ENCODE measurements at regions of chr11 and their contacts with region 1.

Region 1: GRCh38 chr11:9613118-9613829 is 39.8 kb downstream of the WEE1 start:
- DNase-seq: peak; percentile 91
- ATAC-seq: peak; percentile 76
- H3K4me3 Mint-ChIP-seq: peak overlapping the region; percentile 82
- H3K27ac Mint-ChIP-seq: peak overlapping the region; percentile 94
- H3K4me1 Mint-ChIP-seq: peaks cover 27% of the 10 kb centered on the region
- H3K27me3 Mint-ChIP-seq: peaks cover 4% of the 10 kb centered on the region

Region 2: GRCh38 chr11:9565822-9566560 is 47.3 kb before region 1 on chr11:
- CTCF ChIA-PET with region 1: interaction called, 12 read pairs
- POLR2A ChIA-PET with region 1: interaction called, 24 read pairs
- DNase-seq: peak; percentile 57
- ATAC-seq: peak; percentile 92
- H3K4me3 Mint-ChIP-seq: no peak overlapping the region
- H3K27ac Mint-ChIP-seq: peak overlapping the region; percentile 54
- H3K4me1 Mint-ChIP-seq: peaks cover 22% of the 10 kb centered on the region
- H3K27me3 Mint-ChIP-seq: peaks cover 9% of the 10 kb centered on the region

Region 3: DNA sequence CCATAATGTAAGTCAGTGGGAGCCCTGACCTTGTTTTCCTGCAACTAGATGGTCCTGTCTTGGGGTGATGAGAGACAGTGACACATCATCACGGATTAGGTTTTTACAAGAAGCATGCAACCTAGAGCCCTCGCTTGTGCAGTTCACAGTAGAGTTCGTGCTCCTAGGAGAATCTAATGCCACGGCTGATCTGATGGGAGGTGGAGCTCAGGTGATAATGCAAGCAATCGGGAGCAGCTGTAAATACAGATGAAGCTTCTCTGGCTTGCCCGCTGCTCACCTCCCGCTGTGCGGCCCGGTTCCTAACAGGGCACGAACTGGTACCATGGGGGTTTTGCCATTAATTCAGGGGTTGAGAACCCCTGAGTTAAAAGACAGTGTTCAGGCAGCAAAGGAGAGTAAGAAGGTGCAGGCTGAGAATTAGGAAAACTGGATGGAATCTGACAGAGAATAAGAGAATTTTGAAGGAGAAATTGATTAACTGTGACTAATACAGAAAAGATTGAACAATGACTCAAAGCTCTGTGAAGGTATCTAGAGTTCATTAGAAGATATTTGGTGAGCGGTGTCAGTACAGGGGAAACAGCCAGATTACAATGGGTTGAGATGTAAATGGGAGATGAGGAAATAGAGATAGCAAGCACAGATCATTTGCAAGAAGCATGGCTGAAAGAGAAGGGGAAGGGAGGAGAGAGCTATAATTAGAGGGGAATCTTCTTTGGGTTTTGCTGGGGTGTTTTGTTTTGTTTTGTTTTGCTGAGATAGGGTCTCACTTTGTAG is 18.8 kb before region 1 on chr11:
- CTCF ChIA-PET with region 1: interaction called, 62 read pairs
- POLR2A ChIA-PET with region 1: no interaction called
- DNase-seq: no peak
- ATAC-seq: no peak
- H3K4me3 Mint-ChIP-seq: no peak overlapping the region
- H3K27ac Mint-ChIP-seq: no peak overlapping the region
- H3K4me1 Mint-ChIP-seq: no peaks in the 10 kb centered on the region
- H3K27me3 Mint-ChIP-seq: peaks cover 9% of the 10 kb centered on the region

Region 4: DNA sequence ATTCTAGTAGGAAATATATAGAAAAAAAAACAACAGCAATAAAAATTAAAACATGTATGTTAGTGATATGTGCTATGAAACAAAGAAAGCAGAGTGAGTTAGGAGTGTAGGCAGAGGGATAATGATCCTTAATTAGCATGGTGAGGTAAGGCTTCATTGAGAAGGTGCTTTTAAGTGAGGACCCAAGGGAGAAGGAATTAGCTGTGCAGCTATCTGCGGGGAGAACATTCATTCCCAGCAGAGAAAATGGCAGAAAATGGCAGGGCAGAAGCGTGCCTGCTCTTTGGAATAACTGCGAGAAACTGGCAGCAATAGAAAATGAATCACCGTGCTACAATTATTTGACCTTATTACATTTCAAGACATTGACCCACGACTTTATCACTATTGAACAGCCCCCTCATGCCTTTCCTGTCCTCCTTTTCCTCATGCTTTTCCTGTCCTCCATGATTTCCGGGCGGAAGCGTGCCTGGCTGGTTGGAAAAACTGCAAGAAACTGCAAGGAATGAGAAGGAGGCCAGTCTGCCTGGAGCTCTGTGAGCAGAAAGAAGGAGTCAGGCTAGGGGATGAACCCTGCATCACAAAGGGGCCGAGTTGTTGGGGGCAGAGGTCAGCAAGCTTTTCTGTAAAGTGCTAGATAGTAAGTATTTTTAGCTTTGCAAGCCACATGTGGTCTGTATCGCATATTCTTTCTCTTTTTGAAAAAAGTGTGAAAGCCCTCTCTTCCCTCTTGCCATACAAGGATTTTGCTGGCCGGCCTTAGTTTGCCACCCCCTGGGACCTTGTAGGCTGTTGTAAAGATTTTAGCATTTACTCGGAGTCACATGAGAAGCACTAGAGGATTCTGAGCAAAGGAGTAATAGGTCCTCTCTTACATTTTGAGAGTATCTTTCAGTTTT is 13.5 kb after region 1 on chr11:
- CTCF ChIA-PET with region 1: interaction called, 23 read pairs
- POLR2A ChIA-PET with region 1: interaction called, 5 read pairs
- DNase-seq: no peak
- ATAC-seq: no peak
- H3K4me3 Mint-ChIP-seq: no peak overlapping the region
- H3K27ac Mint-ChIP-seq: no peak overlapping the region
- H3K4me1 Mint-ChIP-seq: no peaks in the 10 kb centered on the region
- H3K27me3 Mint-ChIP-seq: peaks cover 15% of the 10 kb centered on the region

Region 5: DNA sequence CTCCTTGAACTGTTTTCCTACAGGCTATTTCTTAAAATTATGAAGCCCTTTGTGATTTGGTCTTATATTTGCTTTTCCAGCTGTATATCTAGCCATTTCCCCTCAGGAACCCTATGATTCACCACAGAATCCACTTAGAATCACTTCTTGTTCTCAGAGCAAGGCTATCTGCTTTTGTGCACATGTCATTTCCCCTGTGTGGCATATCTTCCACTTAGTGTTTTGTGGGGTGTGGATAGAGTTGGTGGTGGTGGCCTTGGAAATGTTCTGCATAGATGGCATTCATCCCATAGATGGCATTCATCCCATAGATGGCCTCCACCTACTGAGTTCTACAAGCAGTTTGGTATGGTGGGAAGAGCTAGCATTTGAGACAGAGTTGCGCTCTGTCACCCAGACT is 95.3 kb after region 1 on chr11:
- CTCF ChIA-PET with region 1: no interaction called
- POLR2A ChIA-PET with region 1: no interaction called
- DNase-seq: no peak
- ATAC-seq: no peak
- H3K4me3 Mint-ChIP-seq: no peak overlapping the region
- H3K27ac Mint-ChIP-seq: no peak overlapping the region
- H3K4me1 Mint-ChIP-seq: peaks cover 2% of the 10 kb centered on the region
- H3K27me3 Mint-ChIP-seq: peaks cover 3% of the 10 kb centered on the region